Heart left ventricle (tissue), 16 donors: ENCODE measurements at regions of chr17 and their contacts with region 1.

Region 1: DNA sequence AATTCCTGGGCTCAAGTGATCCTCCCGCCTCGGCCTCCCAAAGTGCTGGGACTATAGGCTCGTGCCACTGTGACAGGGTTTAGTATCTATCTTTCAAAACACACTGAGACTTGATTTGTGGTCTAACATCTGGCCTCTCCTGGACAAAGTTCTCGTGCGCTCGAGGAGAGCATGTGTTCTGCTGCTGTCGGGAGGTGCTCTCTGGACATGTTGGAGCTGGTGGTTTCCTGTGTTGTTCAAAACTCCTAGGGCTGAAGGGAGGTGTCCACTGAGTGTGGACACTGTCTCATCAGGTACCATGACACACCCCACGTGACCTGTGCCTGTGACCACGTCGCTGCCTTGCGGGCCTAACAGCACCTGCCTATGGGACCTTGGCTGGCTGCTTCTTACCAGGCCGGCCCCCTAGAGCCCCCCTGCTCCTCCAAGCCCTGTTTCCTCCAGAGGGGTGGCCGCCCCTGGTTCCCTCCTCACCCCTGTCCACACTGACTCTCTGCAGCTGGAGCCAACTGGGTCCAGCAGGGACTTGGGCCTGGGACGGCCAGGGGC is 5.6 kb downstream of the RFNG start:
- DNase-seq: no peak
- ATAC-seq: no peak
- H3K4me3 ChIP-seq: no peak overlapping the region
- H3K27ac ChIP-seq: no peak overlapping the region
- H3K4me1 ChIP-seq: peaks cover 0 to 17% (median 10%) of the 10 kb centered on the region in 12 donors
- H3K27me3 ChIP-seq: no peaks in the 10 kb centered on the region
- CTCF ChIP-seq: no peak
- POLR2A ChIP-seq: no peak

Region 2: GRCh38 chr17:82072827-82073226 is 26.8 kb after region 1 on chr17:
- intact Hi-C with region 1: loop called in 1 of 10 experiments (anchors 1 kb)
- DNase-seq: no peak
- ATAC-seq: no peak
- H3K4me3 ChIP-seq: no peak overlapping the region
- H3K27ac ChIP-seq: no peak overlapping the region
- H3K4me1 ChIP-seq: peaks cover 0 to 3% (median 0%) of the 10 kb centered on the region in 12 donors
- H3K27me3 ChIP-seq: no peaks in the 10 kb centered on the region
- CTCF ChIP-seq: no peak
- POLR2A ChIP-seq: no peak